Posterior vena cava (tissue), 2 donors: ENCODE measurements at regions of chr1 and their contacts with region 1.

Region 1: GRCh38 chr1:30242722-30243457 is 480.5 kb downstream of the MATN1 start:
- DNase-seq: no peak

Region 2: GRCh38 chr1:30277911-30278310 is 35.0 kb after region 1 on chr1:
- intact Hi-C with region 1: loop called in 1 of 2 experiments (anchors 1 kb)
- DNase-seq: no peak